ENCODE measurements at regions of chr17 and their contacts with region 1.

Region 1: GRCh38 chr17:81394921-81395599 is at the start of gene BAHCC1:
- DNase-seq: peak; percentile 100
- total RNA-seq, gene BAHCC1: 17.3 to 19.1 TPM

Region 2: GRCh38 chr17:80426681-80427326 is 968.3 kb before region 1 on chr17:
- intact Hi-C with region 1: no loop called
- DNase-seq: peak; percentile 90

Region 3: DNA sequence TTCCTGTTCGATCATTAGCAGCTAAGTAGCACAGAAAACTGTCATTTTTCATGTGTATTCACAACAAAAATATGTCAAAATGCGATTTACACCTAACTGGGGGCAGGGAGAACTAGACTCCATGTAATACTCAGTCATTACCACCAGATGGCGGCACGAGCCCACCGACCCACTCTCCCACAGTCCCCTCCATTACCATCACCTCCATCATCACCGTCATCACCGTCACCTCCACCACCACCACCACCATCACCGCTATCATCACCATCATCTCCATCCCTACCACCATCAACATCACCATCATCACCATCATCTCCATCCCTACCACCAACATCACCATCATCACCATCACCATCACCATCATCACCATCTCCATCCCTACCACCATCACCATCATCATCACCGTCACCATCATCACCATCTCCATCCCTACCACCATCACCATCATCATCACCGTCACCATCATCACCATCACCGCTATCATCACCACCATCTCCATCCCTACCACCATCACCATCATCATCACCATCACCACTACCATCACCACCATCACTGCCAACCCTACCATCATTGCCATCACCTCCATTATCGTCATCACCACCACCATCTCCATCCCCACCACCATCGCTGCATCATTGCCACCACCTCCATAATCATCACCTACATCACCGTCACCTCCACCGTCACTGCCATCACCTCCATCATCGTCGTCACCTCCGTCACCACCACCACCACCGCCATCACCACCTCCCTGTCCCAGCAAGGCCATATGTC is 141.5 kb before region 1 on chr17:
- intact Hi-C with region 1: loop called (anchors 10 kb)
- DNase-seq: no peak

Region 4: GRCh38 chr17:81294856-81295680 is 100.0 kb before region 1 on chr17 and contains the start of gene SLC38A10:
- intact Hi-C with region 1: loop called in 1 of 2 experiments (anchors 10 kb)
- DNase-seq: peak; percentile 98
- total RNA-seq, gene SLC38A10: 59.6 to 85.1 TPM

Region 5: GRCh38 chr17:81511804-81512559 is 116.9 kb after region 1 on chr17:
- intact Hi-C with region 1: loop called in 1 of 2 experiments (anchors 2 kb)
- DNase-seq: no peak

Region 6: DNA sequence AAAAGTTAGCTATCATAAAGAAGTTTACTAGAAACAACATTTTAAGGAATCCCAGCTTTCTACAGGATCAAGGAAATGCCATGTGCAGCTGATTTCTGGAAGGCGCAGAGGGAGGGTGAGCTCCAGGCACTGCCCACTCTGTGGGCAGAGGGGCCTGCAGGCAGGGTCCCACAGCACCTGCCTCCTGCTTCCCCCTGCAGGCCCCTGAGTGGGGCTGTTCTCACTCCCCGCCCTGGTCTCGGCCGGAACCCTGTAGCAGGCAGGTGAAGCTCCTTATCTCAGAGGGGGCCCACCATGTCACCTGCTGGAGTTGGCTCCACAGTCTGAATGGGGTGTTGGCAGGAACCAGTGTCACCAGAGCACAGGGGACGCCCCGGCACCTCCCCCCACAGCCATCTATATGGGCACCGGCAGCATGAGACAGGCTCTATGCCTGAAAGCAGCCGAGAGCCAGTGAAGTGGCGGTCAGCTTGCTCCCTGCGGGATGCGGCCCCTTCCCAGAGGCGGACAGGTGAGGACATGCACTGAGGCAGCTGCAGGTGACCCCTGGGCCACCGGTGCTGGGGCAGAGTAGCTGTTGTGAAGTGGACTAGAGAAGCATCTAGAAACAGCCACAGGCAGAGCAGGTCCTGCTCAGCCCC is 750.6 kb after region 1 on chr17:
- intact Hi-C with region 1: no loop called
- DNase-seq: no peak